ENCODE measurements at regions of chr11 and their contacts with region 1.

Region 1: DNA sequence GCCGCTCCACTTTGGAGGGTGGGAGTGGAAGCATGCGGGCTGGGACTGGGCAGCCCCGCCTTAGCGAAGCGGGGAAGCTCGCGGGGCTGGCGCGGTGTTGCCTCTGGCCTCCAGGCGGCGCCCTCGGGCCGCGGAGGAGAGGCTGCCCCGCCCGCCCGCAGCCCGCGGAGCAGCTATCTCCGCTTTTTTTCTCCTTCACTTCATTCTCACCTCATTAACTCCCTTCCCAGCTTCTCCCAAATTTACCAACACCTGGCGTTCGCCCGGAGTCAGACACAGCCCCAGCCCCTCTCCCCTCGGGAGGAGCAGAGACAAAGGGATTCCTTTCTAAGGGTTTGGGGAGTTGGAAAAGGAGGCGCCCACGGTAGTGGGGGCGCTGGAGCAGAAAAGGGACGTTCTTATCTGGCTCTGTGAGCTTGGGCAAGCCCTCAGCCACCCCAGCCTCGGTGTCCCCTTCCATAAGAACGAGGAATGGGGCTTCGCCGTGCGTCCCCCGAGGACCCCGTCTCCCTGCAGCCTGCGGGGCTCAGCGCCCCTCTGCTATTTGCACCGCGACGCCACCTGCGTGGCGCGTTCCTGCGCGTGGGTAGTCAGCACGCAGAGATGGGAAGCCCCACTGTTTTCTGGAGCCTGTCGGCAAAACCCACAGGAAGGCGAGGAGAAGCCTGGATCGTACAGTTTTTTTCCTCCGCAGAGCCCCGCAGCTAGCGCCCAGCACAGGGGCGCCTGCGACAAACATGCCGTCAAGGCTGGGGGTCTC is 1.5 kb upstream of the WNT11 start:
- DNase-seq: peak; percentile 89
- H3K4me3 ChIP-seq: peak overlapping the region; percentile 22 to 53 (median 46)
- H3K27ac ChIP-seq: no peak overlapping the region
- H3K4me1 ChIP-seq: peaks cover 0 to 58% (median 51%) of the 10 kb centered on the region in 4 donors
- H3K27me3 ChIP-seq: peaks cover 14 to 89% (median 55%) of the 10 kb centered on the region in 3 donors
- CTCF ChIP-seq: peak; percentile 83 to 96 (median 92)
- EP300 ChIP-seq: no peak
- POLR2A ChIP-seq: no peak

Region 2: DNA sequence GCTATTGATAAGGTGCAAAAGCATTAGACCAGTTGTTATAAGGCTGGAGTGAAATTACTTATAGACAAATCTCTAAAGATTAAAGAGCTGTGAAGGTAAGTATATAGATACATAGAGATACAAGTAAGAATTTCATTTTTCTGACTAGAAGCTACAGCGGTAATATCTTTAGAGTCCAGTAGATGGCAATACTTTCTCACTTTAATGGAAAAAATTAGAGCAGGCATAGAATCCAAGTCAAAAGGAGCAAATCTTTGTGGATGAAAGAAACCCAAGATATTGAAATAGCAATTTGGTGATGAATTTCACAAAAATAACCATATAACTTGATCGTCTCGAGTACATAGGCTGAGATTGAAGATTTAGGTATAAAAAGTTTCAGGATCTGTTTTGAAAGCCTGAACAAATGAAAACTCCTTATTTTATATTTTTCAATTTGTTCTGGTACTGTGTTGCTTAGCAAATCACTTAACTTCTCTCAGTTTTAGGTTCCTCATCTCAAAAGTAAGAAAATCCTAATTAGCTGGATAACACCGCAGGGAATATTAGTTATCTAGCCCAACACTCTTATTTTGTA is 310.9 kb before region 1 on chr11:
- intact Hi-C with region 1: loop called (anchors 2 kb)
- DNase-seq: no peak
- H3K4me3 ChIP-seq: no peak overlapping the region
- H3K27ac ChIP-seq: no peak overlapping the region
- H3K4me1 ChIP-seq: peaks cover 0 to 30% (median 23%) of the 10 kb centered on the region in 4 donors
- H3K27me3 ChIP-seq: no peaks in the 10 kb centered on the region
- CTCF ChIP-seq: peak; percentile 47 to 74 (median 71)
- EP300 ChIP-seq: no peak
- POLR2A ChIP-seq: no peak

Region 3: GRCh38 chr11:76175783-76176182 is 32.0 kb before region 1 on chr11:
- intact Hi-C with region 1: no loop called
- DNase-seq: no peak
- H3K4me3 ChIP-seq: no peak overlapping the region
- H3K27ac ChIP-seq: no peak overlapping the region
- H3K4me1 ChIP-seq: no peaks in the 10 kb centered on the region
- H3K27me3 ChIP-seq: no peaks in the 10 kb centered on the region
- CTCF ChIP-seq: no peak
- EP300 ChIP-seq: no peak
- POLR2A ChIP-seq: no peak

Region 4: DNA sequence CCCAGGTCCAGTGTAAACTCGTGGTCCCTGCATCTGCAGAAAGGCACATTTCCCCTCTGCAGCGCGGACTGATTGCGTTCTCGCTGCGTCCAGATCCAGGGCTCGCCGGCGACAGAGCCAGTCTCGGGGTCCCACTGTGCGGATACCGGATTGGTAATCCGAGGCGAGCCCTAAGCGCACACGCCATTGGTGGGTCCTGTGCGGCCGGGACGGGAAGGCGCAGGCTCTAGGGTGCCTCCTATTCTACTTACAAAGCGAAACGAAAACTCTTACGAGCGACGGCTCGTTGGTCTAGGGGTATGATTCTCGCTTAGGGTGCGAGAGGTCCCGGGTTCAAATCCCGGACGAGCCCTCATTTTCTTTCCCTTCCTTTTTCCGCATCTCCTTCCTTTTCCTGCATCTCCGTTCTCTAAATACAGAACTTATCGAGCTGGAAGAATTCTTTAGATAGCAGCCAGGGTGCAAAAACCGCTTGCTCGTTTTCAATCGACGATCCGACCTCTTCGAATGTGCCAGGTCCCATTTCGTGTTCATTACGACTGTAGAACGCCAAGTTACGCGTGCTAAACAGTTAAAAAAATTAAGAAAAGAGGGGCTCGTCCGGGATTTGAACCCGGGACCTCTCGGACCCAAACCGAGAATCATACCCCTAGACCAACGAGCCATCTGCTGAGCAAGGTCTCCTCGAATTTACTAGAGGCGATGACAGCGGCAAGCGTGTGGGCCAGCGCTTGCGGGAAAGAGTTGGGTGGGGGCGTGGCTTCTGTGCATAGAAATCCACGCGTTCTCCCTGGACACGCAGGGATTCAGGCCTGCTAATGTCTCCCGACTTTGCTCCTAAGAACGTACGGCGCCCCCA is 27.6 kb after region 1 on chr11:
- intact Hi-C with region 1: loop called (anchors 1 kb)
- DNase-seq: peak; percentile 95
- H3K4me3 ChIP-seq: peak overlapping the region; percentile 48 to 83 (median 74)
- H3K27ac ChIP-seq: peak overlapping the region; percentile 83 to 90 (median 89)
- H3K4me1 ChIP-seq: peaks cover 0 to 23% (median 17%) of the 10 kb centered on the region in 4 donors
- H3K27me3 ChIP-seq: no peaks in the 10 kb centered on the region
- CTCF ChIP-seq: no peak
- EP300 ChIP-seq: no peak
- POLR2A ChIP-seq: peak in 1 of 2 donors; percentile 33

Region 5: GRCh38 chr11:76318744-76319384 is 111.0 kb after region 1 on chr11:
- intact Hi-C with region 1: loop called (anchors 1 kb)
- DNase-seq: peak; percentile 89
- H3K4me3 ChIP-seq: no peak overlapping the region
- H3K27ac ChIP-seq: no peak overlapping the region
- H3K4me1 ChIP-seq: peaks cover 0 to 7% (median 3%) of the 10 kb centered on the region in 4 donors
- H3K27me3 ChIP-seq: peaks cover 11 to 25% (median 19%) of the 10 kb centered on the region in 3 donors
- CTCF ChIP-seq: peak; percentile 64 to 96 (median 92)
- EP300 ChIP-seq: no peak
- POLR2A ChIP-seq: no peak

Region 6: GRCh38 chr11:76670485-76671236 is 462.8 kb after region 1 on chr11 and contains the start of gene LRRC32:
- intact Hi-C with region 1: loop called (anchors 10 kb)
- DNase-seq: peak; percentile 77
- H3K4me3 ChIP-seq: peak within 1 kb of the TSS; percentile 31 to 57 (median 49)
- H3K27ac ChIP-seq: peak within 1 kb of the TSS; percentile 43 to 76 (median 68)
- H3K4me1 ChIP-seq: peaks cover 0 to 24% (median 15%) of the 10 kb centered on the region in 4 donors
- H3K27me3 ChIP-seq: peaks cover 6 to 25% (median 8%) of the 10 kb centered on the region in 3 donors
- CTCF ChIP-seq: no peak
- EP300 ChIP-seq: no peak
- POLR2A ChIP-seq: no peak
- total RNA-seq, gene LRRC32: 6.4 to 30.7 (median 16.2) TPM

Region 7: DNA sequence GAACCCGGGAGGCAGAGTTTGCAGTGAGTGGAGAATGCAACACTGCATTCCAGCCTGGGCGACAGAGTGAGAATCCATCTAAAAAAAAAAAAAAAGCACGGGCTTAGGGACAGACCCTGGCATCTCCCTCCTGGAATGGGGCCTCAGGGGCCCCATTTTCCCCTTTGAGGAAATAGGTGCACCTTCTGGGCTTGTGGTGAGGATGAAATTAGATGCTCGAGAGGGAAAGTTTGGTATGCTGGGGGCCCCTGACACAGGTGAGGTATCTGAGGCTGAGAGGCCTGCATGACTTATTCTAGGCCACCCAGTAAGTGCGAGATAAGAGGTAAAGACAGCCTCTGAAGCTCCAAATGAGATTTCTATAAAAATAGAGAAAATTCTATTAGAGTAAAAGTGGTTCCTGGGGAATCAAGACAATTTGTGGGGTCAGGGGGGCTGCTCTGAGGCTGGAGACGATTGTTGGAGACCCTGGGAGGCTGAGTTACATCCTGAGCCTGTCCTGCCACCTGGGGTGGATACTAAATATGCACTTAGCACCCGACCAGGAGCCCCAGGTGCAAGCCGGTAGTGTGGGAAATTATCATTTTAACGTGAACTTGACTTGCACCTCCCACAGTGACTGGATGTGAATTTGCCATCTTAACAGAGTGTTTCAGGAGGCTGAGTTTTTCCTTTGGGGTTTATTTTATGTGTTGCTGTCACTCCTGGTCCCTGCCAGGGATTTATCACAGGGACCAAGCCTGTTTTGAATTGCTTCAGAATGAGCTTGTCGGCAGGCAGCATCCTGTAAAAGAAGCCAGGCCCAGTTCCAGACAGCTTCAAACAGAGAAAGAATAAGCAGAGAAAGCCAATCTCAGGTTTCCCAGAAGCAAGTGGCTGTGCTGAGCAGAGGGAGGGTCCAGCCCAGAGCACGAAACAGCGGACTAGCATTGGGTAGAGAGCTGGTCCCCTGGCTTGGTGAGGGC is 526.9 kb after region 1 on chr11:
- intact Hi-C with region 1: no loop called
- DNase-seq: no peak
- H3K4me3 ChIP-seq: no peak overlapping the region
- H3K27ac ChIP-seq: no peak overlapping the region
- H3K4me1 ChIP-seq: peaks cover 0 to 8% (median 2%) of the 10 kb centered on the region in 4 donors
- H3K27me3 ChIP-seq: no peaks in the 10 kb centered on the region
- CTCF ChIP-seq: no peak
- EP300 ChIP-seq: no peak
- POLR2A ChIP-seq: no peak